Caco-2 (cell line): ENCODE measurements at regions of chr12 and their contacts with region 1.

Region 1: DNA sequence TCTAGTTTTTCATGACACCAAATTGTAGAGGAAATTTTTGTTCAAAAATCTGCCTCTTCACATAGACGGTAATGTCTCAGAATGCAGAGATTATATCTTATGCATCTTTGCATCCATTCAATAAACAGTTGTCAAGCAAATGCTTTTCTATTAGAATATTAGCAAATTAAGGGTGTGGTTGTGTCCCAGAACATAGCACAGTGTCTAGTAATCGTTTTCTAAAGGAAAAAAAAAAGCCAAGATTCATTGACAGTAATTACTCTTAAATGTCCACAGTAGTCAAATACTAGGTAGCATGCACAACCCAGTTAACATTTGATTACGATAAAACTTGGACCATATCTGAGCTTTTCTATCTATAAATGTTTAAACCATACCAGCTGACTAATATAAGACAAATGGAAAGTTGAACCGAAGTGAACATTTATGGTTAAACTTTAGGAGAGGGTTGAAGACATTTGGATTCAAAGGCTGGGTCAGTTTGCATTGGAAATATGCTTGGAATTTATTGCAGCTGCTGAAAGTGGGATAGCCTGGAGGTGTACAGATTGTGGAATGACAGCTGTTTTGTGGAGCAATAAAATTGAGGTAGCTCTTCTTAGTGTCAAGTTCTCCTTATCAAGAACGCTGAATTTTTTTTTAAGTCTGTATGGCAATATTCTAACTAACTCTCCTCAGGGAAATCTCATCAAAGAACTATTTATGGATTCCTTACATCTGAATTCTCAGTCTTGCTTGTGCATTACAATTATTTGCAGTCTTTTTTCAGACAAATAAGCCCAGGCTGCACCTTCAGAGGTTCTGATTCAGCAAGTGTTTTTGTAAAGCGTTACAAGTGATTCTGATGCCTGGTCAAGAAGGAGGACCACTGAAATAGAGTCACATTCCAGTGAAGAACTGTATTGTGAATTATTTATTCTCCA is 66.7 kb upstream of the ATP2B1 start:
- DNase-seq: peak; percentile 74 to 77
- H3K4me3 ChIP-seq: no peak overlapping the region
- H3K4me3 Mint-ChIP-seq: peak overlapping the region; percentile 41
- H3K27ac Mint-ChIP-seq: peak overlapping the region; percentile 72
- H3K4me1 ChIP-seq: peaks cover 47% of the 10 kb centered on the region
- H3K4me1 Mint-ChIP-seq: peaks cover 41% of the 10 kb centered on the region
- H3K27me3 ChIP-seq: no peaks in the 10 kb centered on the region
- H3K27me3 Mint-ChIP-seq: no peaks in the 10 kb centered on the region
- CTCF ChIP-seq: no peak

Region 2: DNA sequence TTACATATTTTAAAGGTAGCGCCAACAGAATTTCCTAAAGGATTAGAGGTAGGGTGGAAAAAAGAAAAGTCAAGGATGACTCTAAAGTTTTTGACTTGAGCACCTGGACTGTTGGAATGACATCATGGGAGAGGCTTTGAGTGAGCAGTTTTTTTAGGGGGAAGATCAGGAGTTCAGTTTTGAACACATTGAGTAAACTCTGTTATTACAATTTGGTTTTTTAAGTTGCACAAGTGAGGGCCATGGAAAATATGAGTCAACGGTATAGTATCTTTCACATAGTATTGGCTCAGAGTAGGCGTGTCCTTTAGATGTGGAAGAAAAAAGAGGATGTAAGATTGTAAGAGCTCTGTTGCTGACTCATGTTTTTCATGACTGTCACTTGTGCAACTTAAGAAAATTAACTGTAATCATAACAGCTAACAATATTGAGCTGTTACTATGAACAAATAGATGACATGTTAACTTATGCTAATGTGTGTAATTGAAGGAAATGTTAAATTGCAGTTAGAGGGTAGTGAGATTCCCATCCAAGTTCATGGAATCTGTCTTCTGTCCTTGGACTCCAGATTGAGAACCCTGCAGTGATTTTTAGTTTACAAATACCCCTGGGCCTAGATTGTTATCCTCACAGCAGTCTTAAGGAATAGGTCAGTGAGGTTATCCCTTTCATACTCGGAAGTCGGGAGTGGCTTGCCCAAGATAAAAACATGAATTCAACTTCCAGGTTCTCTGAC is 18.6 kb before region 1 on chr12:
- CTCF ChIA-PET with region 1: no interaction called
- POLR2A ChIA-PET with region 1: no interaction called
- intact Hi-C with region 1: loop called (anchors 2 kb)
- DNase-seq: peak in 1 of 2 experiments; percentile 47
- H3K4me3 ChIP-seq: no peak overlapping the region
- H3K4me3 Mint-ChIP-seq: no peak overlapping the region
- H3K27ac Mint-ChIP-seq: peak overlapping the region; percentile 6
- H3K4me1 ChIP-seq: peaks cover 19% of the 10 kb centered on the region
- H3K4me1 Mint-ChIP-seq: peaks cover 16% of the 10 kb centered on the region
- H3K27me3 ChIP-seq: no peaks in the 10 kb centered on the region
- H3K27me3 Mint-ChIP-seq: no peaks in the 10 kb centered on the region
- CTCF ChIP-seq: no peak

Region 3: DNA sequence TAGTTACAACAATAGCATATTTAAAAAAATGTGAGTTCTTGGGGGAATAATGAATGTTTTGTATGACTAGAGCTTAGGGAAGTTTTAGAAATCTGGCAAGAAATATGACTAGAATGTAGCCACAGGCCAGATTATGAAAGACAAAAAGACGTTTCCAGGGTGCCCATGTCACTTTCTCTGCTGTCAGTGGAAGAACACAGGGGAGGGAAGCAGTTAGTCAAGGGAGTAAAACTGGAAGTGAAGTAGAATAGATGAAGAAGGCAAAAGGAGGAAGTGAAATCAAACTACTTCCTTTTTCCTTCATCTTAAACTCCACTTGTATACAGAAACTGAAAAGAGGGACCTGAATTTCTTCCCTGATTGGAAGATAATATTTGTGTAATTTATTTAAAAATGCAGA is 14.5 kb after region 1 on chr12:
- CTCF ChIA-PET with region 1: no interaction called
- POLR2A ChIA-PET with region 1: no interaction called
- intact Hi-C with region 1: loop called (anchors 2 kb)
- DNase-seq: no peak
- H3K4me3 ChIP-seq: no peak overlapping the region
- H3K4me3 Mint-ChIP-seq: no peak overlapping the region
- H3K27ac Mint-ChIP-seq: no peak overlapping the region
- H3K4me1 ChIP-seq: peaks cover 15% of the 10 kb centered on the region
- H3K4me1 Mint-ChIP-seq: peaks cover 5% of the 10 kb centered on the region
- H3K27me3 ChIP-seq: no peaks in the 10 kb centered on the region
- H3K27me3 Mint-ChIP-seq: no peaks in the 10 kb centered on the region
- CTCF ChIP-seq: no peak

Region 4: DNA sequence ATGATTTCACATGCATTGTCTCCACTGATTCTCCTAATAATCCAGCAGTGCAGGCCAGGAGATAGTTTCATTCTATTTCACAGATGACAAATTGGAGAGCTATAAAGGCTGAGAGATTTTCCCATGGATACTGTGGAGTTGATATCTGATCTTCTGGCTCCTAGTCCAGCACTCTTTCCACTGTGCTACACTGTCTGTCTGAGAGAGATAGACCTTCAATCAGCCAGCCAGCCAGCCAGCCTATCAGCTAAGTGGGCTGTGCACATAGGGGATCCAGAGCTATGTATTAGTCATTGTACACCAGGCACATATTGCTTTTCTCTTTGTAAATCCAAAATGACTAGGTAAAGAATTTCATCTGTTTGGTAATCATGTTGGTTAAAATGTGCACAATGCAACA is 25.1 kb after region 1 on chr12:
- CTCF ChIA-PET with region 1: no interaction called
- POLR2A ChIA-PET with region 1: no interaction called
- intact Hi-C with region 1: loop called (anchors 2 kb)
- DNase-seq: no peak
- H3K4me3 ChIP-seq: no peak overlapping the region
- H3K4me3 Mint-ChIP-seq: no peak overlapping the region
- H3K27ac Mint-ChIP-seq: no peak overlapping the region
- H3K4me1 ChIP-seq: peaks cover 51% of the 10 kb centered on the region
- H3K4me1 Mint-ChIP-seq: peaks cover 10% of the 10 kb centered on the region
- H3K27me3 ChIP-seq: no peaks in the 10 kb centered on the region
- H3K27me3 Mint-ChIP-seq: no peaks in the 10 kb centered on the region
- CTCF ChIP-seq: no peak